ENCODE measurements at regions of chr1 and their contacts with region 1.

Region 1: GRCh38 chr1:163174524-163175437 is 27.9 kb downstream of the RGS5 start:
- DNase-seq: no peak
- H3K4me3 ChIP-seq: peak overlapping the region; percentile 6 to 38 (median 34)
- H3K27ac ChIP-seq: peak overlapping the region; percentile 44 to 69 (median 62)
- H3K4me1 ChIP-seq: peaks cover 0 to 57% (median 51%) of the 10 kb centered on the region in 4 donors
- H3K27me3 ChIP-seq: no peaks in the 10 kb centered on the region
- CTCF ChIP-seq: peak; percentile 89 to 91 (median 89)
- EP300 ChIP-seq: no peak
- POLR2A ChIP-seq: no peak

Region 2: GRCh38 chr1:162861101-162861500 is 313.7 kb before region 1 on chr1 and contains the start of gene CCDC190:
- intact Hi-C with region 1: loop called (anchors 5 kb)
- DNase-seq: no peak
- H3K4me3 ChIP-seq: no peak within 1 kb of the TSS
- H3K27ac ChIP-seq: peak within 1 kb of the TSS in 3 of 4 donors; percentile 3 to 56 (median 53)
- H3K4me1 ChIP-seq: peaks cover 6 to 17% (median 11%) of the 10 kb centered on the region in 4 donors
- H3K27me3 ChIP-seq: no peaks in the 10 kb centered on the region
- CTCF ChIP-seq: no peak
- EP300 ChIP-seq: no peak
- POLR2A ChIP-seq: no peak
- total RNA-seq, gene CCDC190: 0.26 TPM in 1 of 4 donors, not detected in the others

Region 3: DNA sequence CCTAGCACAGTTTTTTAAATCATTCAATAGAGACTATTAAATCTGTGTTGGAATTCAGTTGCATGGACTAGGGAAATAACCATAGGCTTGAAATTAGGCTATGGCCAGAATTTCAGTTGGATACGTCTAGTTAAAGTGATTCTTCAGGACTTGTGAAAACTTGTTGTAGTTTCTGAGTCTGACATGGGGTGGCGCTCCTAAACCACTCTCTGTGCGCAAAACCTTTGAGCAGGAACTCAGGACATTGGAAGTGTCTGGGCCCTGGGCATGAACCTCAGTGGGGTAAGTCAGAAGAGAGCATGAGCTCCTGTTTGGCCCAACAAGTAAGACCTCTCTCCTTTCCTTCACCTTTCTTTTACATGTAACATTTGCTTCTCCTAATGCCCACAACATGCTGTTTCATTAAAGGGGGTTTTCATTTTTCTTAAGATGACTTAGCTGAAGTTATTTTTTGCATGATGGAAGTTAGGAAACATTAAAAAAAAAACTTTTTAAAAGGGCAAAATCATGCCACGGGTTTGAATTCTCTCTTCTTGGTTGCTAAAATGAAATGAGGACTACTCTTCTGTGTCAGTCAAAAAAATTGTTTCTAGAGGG is 296.7 kb before region 1 on chr1:
- intact Hi-C with region 1: loop called (anchors 5 kb)
- DNase-seq: no peak
- H3K4me3 ChIP-seq: no peak overlapping the region
- H3K27ac ChIP-seq: no peak overlapping the region
- H3K4me1 ChIP-seq: no peaks in the 10 kb centered on the region
- H3K27me3 ChIP-seq: no peaks in the 10 kb centered on the region
- CTCF ChIP-seq: peak; percentile 64 to 78 (median 70)
- EP300 ChIP-seq: no peak
- POLR2A ChIP-seq: no peak

Region 4: GRCh38 chr1:163071405-163072255 is 103.2 kb before region 1 on chr1:
- intact Hi-C with region 1: loop called (anchors 2 kb)
- DNase-seq: no peak
- H3K4me3 ChIP-seq: peak overlapping the region; percentile 42 to 55 (median 49)
- H3K27ac ChIP-seq: peak overlapping the region; percentile 42 to 55 (median 50)
- H3K4me1 ChIP-seq: peaks cover 0 to 59% (median 48%) of the 10 kb centered on the region in 4 donors
- H3K27me3 ChIP-seq: no peaks in the 10 kb centered on the region
- CTCF ChIP-seq: peak; percentile 62 to 70 (median 63)
- EP300 ChIP-seq: no peak
- POLR2A ChIP-seq: no peak

Region 5: GRCh38 chr1:163315773-163316374 is 141.1 kb after region 1 on chr1:
- intact Hi-C with region 1: loop called (anchors 5 kb)
- DNase-seq: no peak
- H3K4me3 ChIP-seq: no peak overlapping the region
- H3K27ac ChIP-seq: no peak overlapping the region
- H3K4me1 ChIP-seq: peaks cover 3 to 6% (median 5%) of the 10 kb centered on the region in 4 donors
- H3K27me3 ChIP-seq: no peaks in the 10 kb centered on the region
- CTCF ChIP-seq: peak; percentile 68 to 77 (median 73)
- EP300 ChIP-seq: no peak
- POLR2A ChIP-seq: no peak

Measured in esophagus muscularis mucosa (tissue), 4 donors.